MCF 10A (cell line): ENCODE measurements at regions of chr20 and their contacts with region 1.

Region 1: GRCh38 chr20:44310664-44311639 is at the start of gene FITM2:
- DNase-seq: peak; percentile 97
- H3K4me3 Mint-ChIP-seq: peak within 1 kb of the TSS; percentile 96
- H3K27ac Mint-ChIP-seq: peak within 1 kb of the TSS; percentile 86
- H3K4me1 Mint-ChIP-seq: peaks cover 11% of the 10 kb centered on the region
- H3K27me3 Mint-ChIP-seq: no peaks in the 10 kb centered on the region
- CTCF ChIP-seq: peak; percentile 90
- total RNA-seq, gene FITM2: 7.2 and 8.1 TPM in 2 replicates

Region 2: DNA sequence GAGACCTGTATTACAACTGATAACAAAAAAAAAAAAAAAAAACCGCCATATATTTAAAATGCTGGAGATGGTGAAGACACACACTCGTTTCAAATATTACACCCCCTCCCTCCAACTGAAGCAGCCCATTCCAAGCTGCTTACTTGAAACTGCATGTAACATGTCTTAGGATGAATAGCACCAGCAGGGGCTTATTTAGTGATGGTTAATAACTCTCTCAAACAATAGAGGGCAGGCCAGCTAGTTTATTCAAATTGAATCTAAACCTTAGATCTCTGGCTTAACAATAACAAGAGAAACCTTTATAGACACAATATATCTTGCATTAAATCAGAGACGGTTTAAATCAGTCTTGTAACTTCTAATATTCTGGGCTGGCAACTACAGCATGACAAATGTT is 114.7 kb before region 1 on chr20:
- CTCF ChIA-PET with region 1: interaction called, 18 read pairs
- POLR2A ChIA-PET with region 1: no interaction called
- intact Hi-C with region 1: no loop called
- DNase-seq: no peak
- H3K4me3 Mint-ChIP-seq: no peak overlapping the region
- H3K27ac Mint-ChIP-seq: no peak overlapping the region
- H3K4me1 Mint-ChIP-seq: peaks cover 10% of the 10 kb centered on the region
- H3K27me3 Mint-ChIP-seq: peaks cover 11% of the 10 kb centered on the region
- CTCF ChIP-seq: peak; percentile 19

Region 3: DNA sequence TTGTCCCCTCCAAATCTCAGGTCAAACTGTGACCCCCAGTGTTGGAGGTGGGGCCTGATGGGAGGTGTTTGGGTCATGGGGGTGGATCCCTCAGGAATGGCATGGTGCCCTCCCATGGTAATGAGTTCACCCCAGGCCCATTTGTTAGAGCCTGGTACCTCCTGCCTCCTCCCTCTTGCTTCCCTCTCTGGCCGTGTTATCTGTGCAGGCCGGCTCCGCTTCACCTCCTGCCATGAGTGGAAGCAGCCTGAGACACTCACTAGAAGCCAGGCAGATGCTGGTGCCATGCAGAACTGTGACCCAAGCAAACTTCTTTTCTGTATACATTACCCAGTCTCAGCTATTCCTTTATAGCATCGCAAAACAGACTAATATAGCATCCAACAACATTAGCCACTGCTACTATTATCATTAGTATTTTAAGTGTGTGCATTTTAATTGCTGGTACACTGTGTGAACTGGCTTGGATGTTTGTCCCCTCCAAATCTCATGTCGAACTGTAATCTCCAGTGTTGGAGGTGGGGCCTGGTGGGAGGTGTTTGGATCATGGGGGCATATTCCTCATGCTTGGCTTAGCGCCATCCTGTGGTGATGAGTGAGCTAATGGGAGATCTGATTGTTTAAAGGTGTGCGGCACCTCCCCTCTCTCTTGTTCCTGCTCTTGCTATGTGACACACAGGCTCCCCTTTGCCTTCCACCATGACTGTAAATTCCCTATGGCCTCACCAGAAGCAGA is 88.2 kb before region 1 on chr20:
- CTCF ChIA-PET with region 1: interaction called, 536 read pairs
- POLR2A ChIA-PET with region 1: interaction called, 63 read pairs
- intact Hi-C with region 1: no loop called
- DNase-seq: no peak
- H3K4me3 Mint-ChIP-seq: no peak overlapping the region
- H3K27ac Mint-ChIP-seq: no peak overlapping the region
- H3K4me1 Mint-ChIP-seq: no peaks in the 10 kb centered on the region
- H3K27me3 Mint-ChIP-seq: no peaks in the 10 kb centered on the region
- CTCF ChIP-seq: no peak

Region 4: DNA sequence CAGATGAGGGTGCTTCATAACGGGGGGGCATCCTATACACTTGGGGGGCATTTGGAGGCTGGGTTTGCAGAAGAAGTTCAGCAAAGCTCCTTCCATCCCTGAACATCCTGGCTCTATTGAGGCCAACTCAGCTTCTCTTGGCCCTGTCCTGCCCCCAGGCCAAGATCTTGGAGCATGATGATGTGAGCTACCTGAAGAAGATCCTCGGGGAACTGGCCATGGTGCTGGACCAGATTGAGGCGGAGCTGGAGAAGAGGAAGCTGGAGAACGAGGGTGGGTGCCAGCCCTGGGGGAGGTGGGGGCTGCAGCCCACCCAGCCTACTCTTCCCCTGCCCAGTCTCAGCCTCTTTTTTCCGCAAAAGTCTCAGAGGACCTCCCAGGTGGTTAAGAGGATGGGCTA is 46.7 kb before region 1 on chr20:
- CTCF ChIA-PET with region 1: interaction called, 25 read pairs
- POLR2A ChIA-PET with region 1: no interaction called
- intact Hi-C with region 1: no loop called
- DNase-seq: peak; percentile 22
- H3K4me3 Mint-ChIP-seq: no peak overlapping the region
- H3K27ac Mint-ChIP-seq: no peak overlapping the region
- H3K4me1 Mint-ChIP-seq: no peaks in the 10 kb centered on the region
- H3K27me3 Mint-ChIP-seq: peaks cover 44% of the 10 kb centered on the region
- CTCF ChIP-seq: no peak

Region 5: DNA sequence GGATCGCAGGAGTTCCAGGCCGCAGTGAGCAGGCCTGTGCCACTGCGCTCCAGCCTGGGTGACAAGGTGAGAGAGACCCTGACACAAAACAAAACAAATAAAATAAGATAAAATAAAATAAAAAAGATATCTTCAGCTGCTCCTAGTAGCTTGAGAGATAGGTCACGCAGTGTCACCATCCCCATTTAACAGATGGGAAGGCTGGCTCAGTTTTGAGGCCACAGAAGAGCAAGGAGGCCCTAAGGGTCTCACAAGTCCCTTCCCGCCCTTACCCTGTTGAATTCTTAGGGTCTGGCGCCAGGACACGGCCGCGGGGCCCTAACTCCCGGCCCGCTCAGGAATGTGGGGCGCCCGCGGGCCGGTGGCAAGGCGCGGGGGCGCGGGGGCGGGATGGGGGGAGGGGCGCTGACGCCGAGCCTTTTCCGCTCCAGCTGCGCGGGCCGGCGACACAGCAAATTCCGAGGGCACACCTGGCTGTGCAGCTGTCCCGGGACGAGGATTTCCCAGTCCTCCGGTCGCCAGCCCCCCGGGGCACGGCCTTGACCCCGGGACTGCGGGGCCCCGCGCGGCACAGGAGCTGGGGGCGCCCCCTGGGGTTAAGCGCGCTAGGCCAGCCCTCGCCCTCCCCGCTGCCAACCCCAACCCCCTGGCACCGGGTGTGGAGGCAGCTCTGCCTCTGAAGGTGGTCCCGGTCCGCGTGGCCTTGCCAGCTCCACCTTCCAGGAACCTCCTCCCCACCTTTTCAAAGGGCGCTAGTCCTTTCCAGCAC is 15.6 kb after region 1 on chr20:
- CTCF ChIA-PET with region 1: interaction called, 90 read pairs
- POLR2A ChIA-PET with region 1: interaction called, 5 read pairs
- intact Hi-C with region 1: no loop called
- DNase-seq: no peak
- H3K4me3 Mint-ChIP-seq: peak overlapping the region; percentile 23
- H3K27ac Mint-ChIP-seq: no peak overlapping the region
- H3K4me1 Mint-ChIP-seq: no peaks in the 10 kb centered on the region
- H3K27me3 Mint-ChIP-seq: no peaks in the 10 kb centered on the region
- CTCF ChIP-seq: no peak

Region 6: DNA sequence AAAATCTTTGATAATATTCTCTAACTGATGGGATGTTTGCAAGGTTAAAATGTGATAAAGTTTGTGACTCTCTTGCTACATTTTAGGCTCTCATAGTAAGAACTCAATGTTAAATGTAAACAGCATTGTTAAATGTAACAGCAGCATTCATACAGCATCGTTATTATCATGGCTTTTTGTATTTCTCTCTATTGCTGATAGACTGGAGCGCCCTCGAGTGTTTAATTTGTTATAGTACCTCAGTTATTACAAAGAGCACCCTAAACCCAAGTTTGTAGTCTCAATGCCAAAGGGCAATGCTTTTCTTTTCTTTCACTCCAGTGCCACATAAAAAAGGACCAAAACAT is 149.8 kb after region 1 on chr20:
- CTCF ChIA-PET with region 1: interaction called, 16 read pairs
- POLR2A ChIA-PET with region 1: no interaction called
- intact Hi-C with region 1: no loop called
- DNase-seq: peak; percentile 64
- H3K4me3 Mint-ChIP-seq: no peak overlapping the region
- H3K27ac Mint-ChIP-seq: no peak overlapping the region
- H3K4me1 Mint-ChIP-seq: peaks cover 13% of the 10 kb centered on the region
- H3K27me3 Mint-ChIP-seq: no peaks in the 10 kb centered on the region
- CTCF ChIP-seq: peak; percentile 66

Region 7: DNA sequence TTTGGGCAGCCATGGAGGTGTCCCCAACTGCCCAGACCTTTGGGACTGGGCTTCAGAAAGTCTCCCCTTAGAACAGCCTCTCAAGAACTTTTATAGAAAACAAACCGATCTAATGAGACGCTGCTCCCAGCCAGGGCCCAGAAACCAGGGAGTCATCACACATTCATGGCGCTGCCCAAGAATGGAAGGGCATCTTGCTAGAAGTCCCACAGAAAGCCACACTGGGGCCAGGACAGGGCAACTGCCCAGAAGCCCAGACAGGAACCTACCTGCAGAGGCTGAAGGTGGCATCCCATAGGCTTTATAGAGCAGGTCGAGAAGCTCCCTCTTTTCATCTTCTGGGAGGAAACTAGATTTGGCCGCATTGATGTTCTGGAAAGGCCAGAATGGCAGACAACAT is 309.1 kb after region 1 on chr20:
- CTCF ChIA-PET with region 1: no interaction called
- POLR2A ChIA-PET with region 1: no interaction called
- intact Hi-C with region 1: no loop called
- DNase-seq: no peak
- H3K4me3 Mint-ChIP-seq: no peak overlapping the region
- H3K27ac Mint-ChIP-seq: no peak overlapping the region
- H3K4me1 Mint-ChIP-seq: no peaks in the 10 kb centered on the region
- H3K27me3 Mint-ChIP-seq: no peaks in the 10 kb centered on the region
- CTCF ChIP-seq: no peak